Activated CD8-positive, alpha-beta T cell treated with anti-CD3 and anti-CD28 coated beads, Interleukin-2, amount 10 ng/mL, durations not matched to agents 7 days and 5 days (primary cell): ENCODE measurements at regions of chr2 and their contacts with region 1.

Region 1: GRCh38 chr2:169237286-169237685 is 125.0 kb downstream of the LRP2 start:
- DNase-seq: no peak
- ATAC-seq: no peak
- H3K4me3 Mint-ChIP-seq: no peak overlapping the region
- H3K27ac Mint-ChIP-seq: no peak overlapping the region
- H3K4me1 Mint-ChIP-seq: peaks cover 7% of the 10 kb centered on the region
- H3K27me3 Mint-ChIP-seq: peaks cover 22% of the 10 kb centered on the region

Region 2: GRCh38 chr2:169039702-169040101 is 197.6 kb before region 1 on chr2:
- CTCF ChIA-PET with region 1: no interaction called
- POLR2A ChIA-PET with region 1: no interaction called
- DNase-seq: no peak
- ATAC-seq: no peak
- H3K4me3 Mint-ChIP-seq: no peak overlapping the region
- H3K27ac Mint-ChIP-seq: no peak overlapping the region
- H3K4me1 Mint-ChIP-seq: peaks cover 10% of the 10 kb centered on the region
- H3K27me3 Mint-ChIP-seq: peaks cover 2% of the 10 kb centered on the region

Region 3: DNA sequence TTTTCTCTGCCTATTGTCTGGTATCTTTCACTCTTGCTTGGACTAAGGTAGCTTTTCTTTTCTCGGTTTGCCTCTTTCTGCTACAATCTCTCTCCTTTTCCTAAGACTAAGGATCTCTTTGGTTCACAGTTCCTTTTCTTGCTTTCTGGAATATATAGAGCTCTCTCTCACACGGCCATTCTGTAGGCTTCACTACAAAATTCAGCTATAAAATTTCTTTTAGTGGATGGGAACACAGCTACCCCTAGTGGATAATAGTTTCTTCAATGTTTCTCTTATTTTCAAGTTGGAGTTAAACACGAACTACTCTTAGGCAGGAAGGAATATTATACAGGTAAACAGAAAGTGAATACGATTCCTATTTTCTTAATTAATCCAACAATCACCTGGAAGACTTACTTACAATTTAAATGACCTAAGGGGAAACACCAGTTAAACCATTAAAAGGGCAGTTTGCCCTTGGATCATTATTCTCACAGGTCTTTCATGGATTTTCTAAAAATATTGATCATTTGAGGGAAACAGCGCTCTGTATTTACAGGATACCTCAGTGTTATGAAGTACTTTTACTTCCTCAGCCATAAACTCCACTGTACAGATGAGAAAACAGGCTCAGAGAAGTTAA is 15.4 kb before region 1 on chr2:
- CTCF ChIA-PET with region 1: interaction called, 15 read pairs
- POLR2A ChIA-PET with region 1: no interaction called
- DNase-seq: no peak
- ATAC-seq: no peak
- H3K4me3 Mint-ChIP-seq: no peak overlapping the region
- H3K27ac Mint-ChIP-seq: no peak overlapping the region
- H3K4me1 Mint-ChIP-seq: peaks cover 6% of the 10 kb centered on the region
- H3K27me3 Mint-ChIP-seq: peaks cover 2% of the 10 kb centered on the region

Region 4: GRCh38 chr2:169260246-169260645 is 23.0 kb after region 1 on chr2:
- CTCF ChIA-PET with region 1: no interaction called
- POLR2A ChIA-PET with region 1: no interaction called
- DNase-seq: no peak
- ATAC-seq: no peak
- H3K4me3 Mint-ChIP-seq: no peak overlapping the region
- H3K27ac Mint-ChIP-seq: no peak overlapping the region
- H3K4me1 Mint-ChIP-seq: no peaks in the 10 kb centered on the region
- H3K27me3 Mint-ChIP-seq: peaks cover 13% of the 10 kb centered on the region

Region 5: DNA sequence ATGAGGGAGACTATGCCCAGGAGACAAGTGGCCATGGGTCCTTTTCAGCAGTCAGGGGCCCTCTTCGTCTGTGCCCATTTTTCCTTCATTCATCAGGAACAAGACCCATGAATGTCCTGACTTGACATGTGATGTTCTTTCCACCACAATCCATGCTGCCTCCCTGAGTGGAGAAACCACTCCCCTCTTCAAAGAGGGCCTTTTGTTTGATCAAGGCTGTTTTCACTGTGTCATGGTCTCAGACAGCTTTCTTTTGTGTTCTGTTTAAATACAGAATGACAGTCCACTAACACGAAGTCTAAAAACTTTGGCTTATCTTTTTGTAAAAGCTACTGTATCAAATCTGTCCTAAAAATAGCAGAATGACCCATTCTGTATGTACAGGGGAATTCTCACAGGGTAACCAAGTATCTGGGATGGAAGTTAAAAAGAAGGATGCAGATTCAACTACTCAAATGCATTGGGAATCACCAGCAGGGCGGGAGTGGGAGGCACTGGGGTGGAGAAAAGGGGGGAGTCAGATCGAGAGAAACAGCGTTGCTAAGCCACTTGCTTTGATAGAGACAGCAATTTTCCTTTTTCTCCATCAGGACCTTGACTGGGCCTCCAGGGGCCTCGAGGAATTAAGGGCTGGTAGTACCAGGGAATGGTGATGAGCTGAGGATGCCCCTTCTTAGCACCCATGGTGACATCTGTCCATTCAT is 111.2 kb after region 1 on chr2:
- CTCF ChIA-PET with region 1: no interaction called
- POLR2A ChIA-PET with region 1: no interaction called
- DNase-seq: no peak
- ATAC-seq: no peak
- H3K4me3 Mint-ChIP-seq: no peak overlapping the region
- H3K27ac Mint-ChIP-seq: no peak overlapping the region
- H3K4me1 Mint-ChIP-seq: no peaks in the 10 kb centered on the region
- H3K27me3 Mint-ChIP-seq: peaks cover 12% of the 10 kb centered on the region